Heart left ventricle (tissue), 16 donors: ENCODE measurements at regions of chr15 and their contacts with region 1.

Region 1: DNA sequence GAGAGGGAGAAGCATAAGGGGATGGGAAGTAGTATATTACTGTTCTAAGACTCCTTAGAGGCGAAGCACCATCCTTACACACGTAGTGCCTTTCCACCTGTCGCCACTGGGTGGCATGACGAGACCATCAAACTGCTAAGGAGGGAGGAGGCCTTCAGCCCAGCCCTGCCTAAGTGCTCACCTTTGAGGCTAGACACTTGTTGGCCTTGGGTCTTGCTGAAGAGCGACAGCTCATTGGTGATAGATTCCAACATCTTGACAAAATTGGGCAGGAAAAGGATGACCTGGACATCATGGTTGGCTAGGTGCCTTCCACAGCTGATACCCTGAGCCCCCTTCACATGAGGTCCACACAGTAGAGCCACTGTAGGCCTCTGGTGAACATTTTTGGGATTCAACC is 19.6 kb downstream of the CLK3 start:
- DNase-seq: peak in 1 of 5 donors; percentile 67
- ATAC-seq: peak; percentile 60 to 77 (median 74)
- H3K4me3 ChIP-seq: no peak overlapping the region
- H3K27ac ChIP-seq: no peak overlapping the region
- H3K4me1 ChIP-seq: peaks cover 0 to 3% (median 0%) of the 10 kb centered on the region in 12 donors
- H3K27me3 ChIP-seq: no peaks in the 10 kb centered on the region
- CTCF ChIP-seq: peak; percentile 65 to 90 (median 86)
- POLR2A ChIP-seq: no peak

Region 2: GRCh38 chr15:74022706-74023470 is 612.3 kb before region 1 on chr15:
- intact Hi-C with region 1: no loop called
- DNase-seq: no peak
- ATAC-seq: no peak
- H3K4me3 ChIP-seq: no peak overlapping the region
- H3K27ac ChIP-seq: no peak overlapping the region
- H3K4me1 ChIP-seq: peaks cover 0 to 32% (median 13%) of the 10 kb centered on the region in 12 donors
- H3K27me3 ChIP-seq: no peaks in the 10 kb centered on the region
- CTCF ChIP-seq: no peak
- POLR2A ChIP-seq: no peak

Region 3: DNA sequence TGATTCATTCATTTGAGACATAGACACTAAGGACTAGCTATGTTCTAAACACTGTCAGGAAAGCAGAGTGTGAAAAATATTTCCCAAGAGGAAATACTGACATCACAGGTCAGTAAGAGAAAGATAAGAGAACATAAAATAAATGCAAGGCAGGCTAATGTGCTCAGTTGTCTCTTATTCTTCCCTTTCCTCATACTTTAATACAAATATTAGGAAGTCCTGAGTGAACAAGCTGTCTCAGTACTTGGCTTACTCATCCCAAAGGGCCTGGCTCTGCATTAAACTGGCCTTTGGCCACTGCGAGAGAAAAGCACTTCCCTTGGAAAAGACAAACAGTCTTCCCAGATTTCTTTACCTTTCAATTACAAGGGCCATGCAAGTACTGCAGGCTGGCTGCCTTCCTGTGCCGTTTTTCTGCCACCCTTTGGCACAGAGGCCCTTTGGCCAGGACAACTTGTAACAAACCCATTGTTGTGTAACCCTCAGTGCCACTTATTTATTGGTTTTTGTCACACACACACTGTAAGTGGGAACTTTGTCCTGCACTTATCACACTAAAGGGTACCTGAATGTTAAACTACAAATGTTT is 28.9 kb after region 1 on chr15:
- intact Hi-C with region 1: no loop called
- DNase-seq: peak in 1 of 5 donors; percentile 56
- ATAC-seq: peak; percentile 77 to 94 (median 93)
- H3K4me3 ChIP-seq: no peak overlapping the region
- H3K27ac ChIP-seq: peak overlapping the region in 8 of 12 donors; percentile 5 to 57 (median 32)
- H3K4me1 ChIP-seq: peaks cover 0 to 31% (median 18%) of the 10 kb centered on the region in 12 donors
- H3K27me3 ChIP-seq: no peaks in the 10 kb centered on the region
- CTCF ChIP-seq: no peak
- POLR2A ChIP-seq: no peak

Region 4: DNA sequence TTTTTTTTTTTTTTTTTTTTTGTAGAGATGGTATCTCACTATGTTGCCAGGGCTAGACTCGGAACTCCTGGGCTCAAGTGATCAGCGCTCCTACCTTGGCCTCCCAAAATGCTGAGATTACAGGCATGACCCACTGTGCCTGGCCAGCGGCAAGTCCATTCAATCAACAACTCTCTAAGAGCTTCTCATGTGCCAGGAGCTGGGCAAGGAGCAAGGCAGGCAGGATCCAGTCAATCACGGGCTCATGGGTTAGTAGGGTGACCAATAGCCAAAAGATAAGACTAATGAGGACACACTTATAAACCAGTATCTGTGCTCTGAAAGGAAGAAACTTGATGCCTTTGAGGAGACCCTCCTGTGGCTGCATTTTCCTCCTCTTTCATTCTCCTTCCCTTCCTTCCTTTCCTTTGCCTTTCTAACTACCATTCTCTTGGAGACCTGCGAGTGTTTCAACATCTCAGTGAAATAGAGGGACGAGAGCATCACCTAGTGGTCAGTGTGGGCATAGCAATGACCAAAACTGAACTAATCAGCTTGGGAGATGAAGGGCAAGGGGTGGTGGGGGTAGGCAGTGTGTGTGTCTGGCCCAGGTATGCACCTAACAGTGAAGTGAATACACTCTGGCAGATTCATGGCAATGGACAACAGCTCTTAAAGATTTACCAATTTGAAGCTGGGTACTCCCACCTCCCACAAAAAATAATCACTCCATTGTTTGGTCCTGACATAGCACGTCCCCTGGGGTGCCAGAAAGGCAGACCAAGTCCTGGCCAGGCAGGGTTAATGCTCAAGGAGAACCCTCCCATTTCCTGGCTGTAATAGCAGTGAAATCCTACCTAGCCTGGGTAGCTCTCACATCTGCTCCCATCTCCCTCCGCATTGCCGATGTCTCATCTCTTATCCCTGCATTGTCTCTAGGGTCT is 315.1 kb after region 1 on chr15:
- intact Hi-C with region 1: loop called in 9 of 10 experiments (anchors 5 to 10 kb)
- DNase-seq: peak in 4 of 5 donors; percentile 55 to 70 (median 56)
- ATAC-seq: peak in 3 of 4 donors; percentile 68 to 83 (median 77)
- H3K4me3 ChIP-seq: no peak overlapping the region
- H3K27ac ChIP-seq: no peak overlapping the region
- H3K4me1 ChIP-seq: peaks cover 0 to 19% (median 9%) of the 10 kb centered on the region in 12 donors
- H3K27me3 ChIP-seq: no peaks in the 10 kb centered on the region
- CTCF ChIP-seq: peak; percentile 92 to 98 (median 95)
- POLR2A ChIP-seq: no peak

Region 5: GRCh38 chr15:74956648-74957300 is 321.5 kb after region 1 on chr15 and contains the start of gene RPP25:
- intact Hi-C with region 1: loop called in 8 of 10 experiments (anchors 5 to 10 kb)
- DNase-seq: peak; percentile 74 to 90 (median 78)
- ATAC-seq: peak; percentile 73 to 91 (median 88)
- H3K4me3 ChIP-seq: peak within 1 kb of the TSS; percentile 23 to 73 (median 58)
- H3K27ac ChIP-seq: peak within 1 kb of the TSS; percentile 47 to 85 (median 76)
- H3K4me1 ChIP-seq: peaks cover 0 to 58% (median 37%) of the 10 kb centered on the region in 12 donors
- H3K27me3 ChIP-seq: peaks cover 0 to 27% (median 10%) of the 10 kb centered on the region in 9 donors
- CTCF ChIP-seq: no peak
- POLR2A ChIP-seq: peak in 1 of 2 donors; percentile 82
- total RNA-seq, gene RPP25: 1.1 to 5.8 (median 2.1) TPM

Region 6: DNA sequence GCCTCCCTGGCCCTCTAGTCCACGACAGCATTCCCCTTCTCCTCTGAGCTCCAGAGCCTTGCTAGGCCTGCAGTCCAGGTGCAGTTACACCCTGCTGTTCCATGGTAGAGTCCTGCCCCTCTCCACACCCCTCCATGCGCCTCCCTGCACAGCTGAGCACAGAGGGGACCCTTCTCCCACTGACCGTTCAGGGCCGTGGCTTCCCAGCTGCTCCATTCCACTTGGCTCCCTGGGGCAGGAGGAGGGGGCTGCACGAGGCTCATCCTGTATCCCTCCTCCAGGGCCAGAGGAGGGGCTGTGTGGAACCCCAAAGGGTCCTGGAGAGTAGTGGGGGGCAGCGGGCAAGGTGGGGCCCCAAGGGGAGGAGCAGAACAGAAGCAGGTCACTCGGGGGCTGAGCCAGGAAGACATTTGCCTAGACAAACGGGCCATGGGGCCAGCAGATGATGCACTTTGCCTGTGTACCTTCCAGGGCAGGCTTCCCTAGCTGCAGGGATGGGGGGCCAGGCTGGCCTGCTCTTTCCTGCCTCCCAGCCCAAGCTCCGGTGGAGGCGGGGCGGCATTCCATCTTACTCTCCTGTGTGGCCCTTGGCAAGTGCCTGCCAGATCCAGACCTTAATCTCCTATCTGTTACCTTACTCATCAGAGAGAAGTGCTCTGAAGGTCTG is 602.2 kb after region 1 on chr15:
- intact Hi-C with region 1: no loop called
- DNase-seq: peak in 1 of 5 donors; percentile 14
- ATAC-seq: peak in 1 of 4 donors; percentile 9
- H3K4me3 ChIP-seq: no peak overlapping the region
- H3K27ac ChIP-seq: no peak overlapping the region
- H3K4me1 ChIP-seq: no peaks in the 10 kb centered on the region
- H3K27me3 ChIP-seq: peaks cover 0 to 11% (median 0%) of the 10 kb centered on the region in 9 donors
- CTCF ChIP-seq: no peak
- POLR2A ChIP-seq: no peak